AG04449 (cell line): ENCODE measurements at regions of chr1 and their contacts with region 1.

Region 1: GRCh38 chr1:211514030-211514754 is 22.2 kb upstream of the RD3 start:
- DNase-seq: peak; percentile 28
- H3K4me3 ChIP-seq: no peak overlapping the region
- CTCF ChIP-seq: peak; percentile 90

Region 2: GRCh38 chr1:211323156-211324063 is 190.8 kb before region 1 on chr1:
- CTCF ChIA-PET with region 1: interaction called, 220 read pairs
- POLR2A ChIA-PET with region 1: interaction called, 3 read pairs
- DNase-seq: no peak
- H3K4me3 ChIP-seq: no peak overlapping the region
- CTCF ChIP-seq: peak; percentile 83

Region 3: DNA sequence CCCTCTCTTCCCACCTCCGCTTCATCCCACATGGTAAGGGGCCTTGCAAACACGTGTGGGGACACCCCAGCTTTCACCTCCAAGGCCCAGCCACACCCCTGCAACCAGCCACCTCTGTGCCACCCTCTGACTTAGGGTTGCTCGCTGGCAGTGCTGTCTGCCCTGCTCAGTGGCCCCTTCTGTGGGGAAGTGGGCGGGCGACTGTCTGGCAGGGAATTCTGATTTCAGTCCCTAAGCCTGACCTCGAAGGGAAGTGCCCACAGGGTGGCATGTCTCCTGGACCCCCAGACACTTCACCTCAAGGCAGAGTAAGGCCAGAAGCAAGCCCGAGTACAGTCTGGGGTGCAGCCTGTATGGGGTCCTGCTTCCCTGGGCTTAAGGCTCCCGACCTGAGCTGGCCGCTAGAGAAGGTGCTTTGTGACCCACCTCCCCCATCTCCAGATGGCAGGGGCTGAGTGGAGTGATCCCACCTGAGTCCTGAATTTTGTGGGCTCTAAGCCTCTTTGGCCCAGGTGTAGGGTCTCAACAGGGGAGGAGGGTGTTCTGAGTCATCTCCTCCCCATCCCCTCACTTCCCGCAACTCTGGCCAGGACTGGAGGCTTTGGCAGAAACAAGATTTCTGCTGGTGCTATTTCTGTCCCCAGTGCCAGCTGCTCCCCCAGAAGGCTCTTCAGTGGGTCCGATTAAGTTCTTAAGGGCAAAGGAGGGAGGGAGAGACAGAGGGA is 29.3 kb before region 1 on chr1:
- CTCF ChIA-PET with region 1: interaction called, 52 read pairs
- POLR2A ChIA-PET with region 1: no interaction called
- DNase-seq: no peak
- H3K4me3 ChIP-seq: no peak overlapping the region
- CTCF ChIP-seq: no peak

Region 4: DNA sequence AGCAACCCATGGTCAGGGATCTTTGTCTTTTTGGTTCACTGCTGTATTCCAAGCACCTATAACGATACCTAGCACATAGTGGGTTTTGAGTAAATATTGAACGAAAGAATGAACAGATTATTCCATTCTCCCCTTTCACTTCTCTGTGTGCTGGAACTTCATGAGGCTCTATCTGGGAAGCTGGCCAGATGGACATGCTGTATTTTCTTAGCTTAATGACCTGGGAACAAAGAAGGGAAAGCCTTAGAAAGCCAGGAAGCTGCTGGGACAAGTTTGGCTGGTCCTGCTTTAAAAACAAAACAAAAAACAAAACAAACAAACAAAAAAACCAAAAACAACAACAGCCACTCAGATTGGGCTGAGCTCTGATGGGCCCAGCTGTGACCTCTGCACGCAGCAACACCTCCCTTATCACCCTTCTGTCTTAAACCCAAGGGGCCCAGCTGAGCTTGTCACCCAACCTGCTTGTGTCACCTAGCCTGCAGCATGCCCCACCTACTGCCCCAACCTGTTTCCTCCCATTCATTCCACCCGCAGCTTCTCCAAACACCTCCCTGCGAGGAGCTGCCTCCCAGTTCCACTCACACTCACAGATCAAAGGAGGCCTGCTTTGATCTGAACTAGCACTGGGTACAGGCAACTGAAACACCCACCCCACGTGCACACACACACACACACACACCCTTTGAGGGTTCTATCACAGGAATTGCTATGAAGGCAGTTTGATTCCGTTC is 27.7 kb after region 1 on chr1:
- CTCF ChIA-PET with region 1: interaction called, 30 read pairs
- POLR2A ChIA-PET with region 1: no interaction called
- DNase-seq: no peak
- H3K4me3 ChIP-seq: no peak overlapping the region
- CTCF ChIP-seq: no peak

Region 5: DNA sequence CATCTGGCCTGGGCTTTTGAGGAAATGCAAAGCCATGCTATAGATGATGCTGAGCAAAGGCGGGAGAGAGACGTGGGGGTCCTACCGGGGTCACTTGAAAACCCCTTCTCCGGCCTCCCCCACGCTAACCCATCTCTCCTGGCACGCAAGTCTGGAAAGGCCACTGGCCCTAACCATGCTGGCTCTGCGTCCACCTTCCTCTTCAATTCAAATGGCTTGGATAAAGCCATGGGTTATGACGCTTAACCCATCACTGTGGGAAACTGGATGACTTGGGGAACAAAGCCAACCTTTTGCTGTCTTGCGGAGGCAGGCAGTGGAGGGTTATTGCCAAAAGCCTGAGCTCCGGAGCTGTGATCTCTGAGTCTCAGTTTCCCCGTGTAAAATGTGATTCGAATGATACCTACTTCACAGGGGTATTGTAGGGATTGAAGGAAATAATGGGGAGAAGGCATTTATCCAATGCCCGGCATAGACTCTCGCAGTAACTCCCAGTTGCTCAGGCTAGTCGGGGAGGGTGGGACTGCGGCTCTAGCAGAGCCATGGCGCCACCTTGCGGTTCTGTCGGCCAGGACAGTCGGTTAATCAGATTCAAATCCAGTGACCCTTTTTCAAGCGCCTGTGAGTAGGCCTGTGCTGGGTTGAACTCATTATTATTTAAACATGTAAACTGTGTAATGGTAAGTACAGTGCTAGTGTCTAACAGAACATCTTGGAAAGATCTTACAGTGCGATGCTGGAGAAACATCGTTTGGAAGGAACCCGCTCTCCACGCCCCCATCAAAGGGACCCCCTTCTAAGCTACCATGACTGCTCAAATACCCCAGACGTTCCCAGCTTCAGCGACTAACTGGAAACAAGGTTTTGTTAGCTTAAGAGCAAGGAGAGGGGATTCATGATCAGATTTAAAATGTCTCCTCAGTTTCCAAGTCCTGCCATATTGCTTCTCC is 140.9 kb after region 1 on chr1:
- CTCF ChIA-PET with region 1: interaction called, 344 read pairs
- POLR2A ChIA-PET with region 1: no interaction called
- DNase-seq: no peak
- H3K4me3 ChIP-seq: no peak overlapping the region
- CTCF ChIP-seq: peak; percentile 90

Region 6: DNA sequence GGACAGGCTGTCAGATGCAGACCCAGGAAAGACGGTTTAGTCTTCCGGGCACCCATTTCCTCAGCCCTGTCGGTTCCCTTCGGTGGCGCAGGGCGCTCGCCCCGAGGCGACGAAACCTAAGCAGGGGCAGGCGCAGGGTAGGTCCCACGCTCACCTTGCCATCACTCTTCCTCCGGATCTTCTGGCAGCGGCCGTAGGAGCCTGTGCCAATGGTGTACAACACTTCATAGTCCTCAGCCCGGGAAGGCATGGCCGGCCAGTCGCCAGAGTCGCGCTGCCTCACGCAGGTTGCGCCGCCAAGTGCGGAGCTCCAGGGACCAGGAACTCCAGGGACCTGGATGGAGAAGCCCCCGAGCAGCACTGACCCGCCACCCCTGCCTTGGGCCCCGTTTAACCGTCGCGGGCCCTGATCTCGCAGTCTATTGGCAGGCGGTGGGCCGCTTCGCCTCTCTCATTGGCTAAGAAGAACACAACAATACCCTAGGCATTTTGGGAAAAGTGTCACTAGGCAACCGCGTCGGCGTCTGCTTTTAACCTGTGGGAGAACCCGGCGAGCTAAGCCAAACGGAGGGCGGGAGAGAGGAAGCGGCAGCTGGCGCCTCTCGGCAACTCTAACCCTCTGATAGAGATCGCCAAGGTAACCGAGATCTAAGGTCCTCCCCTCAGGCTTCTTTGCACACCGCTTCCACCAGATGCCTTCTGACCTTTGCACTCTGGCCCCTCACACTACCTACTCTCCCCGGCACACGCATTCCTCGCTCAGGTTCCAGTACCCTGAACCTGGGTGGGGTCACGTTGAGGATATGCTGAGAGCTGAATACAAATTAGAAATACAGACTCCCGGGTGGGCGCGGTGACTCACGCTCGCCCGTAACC is 161.3 kb after region 1 on chr1 and contains the start of gene NEK2:
- CTCF ChIA-PET with region 1: interaction called, 12 read pairs
- POLR2A ChIA-PET with region 1: no interaction called
- DNase-seq: no peak
- H3K4me3 ChIP-seq: peak within 1 kb of the TSS; percentile 77
- CTCF ChIP-seq: no peak